Activated CD8-positive, alpha-beta memory T cell treated with anti-CD3 and anti-CD28 coated beads, Interleukin-2, amount 10 ng/mL, durations not matched to agents 7 days and 5 days (primary cell): ENCODE measurements at regions of chr1 and their contacts with region 1.

Region 1: GRCh38 chr1:31938174-31938950 is at the start of gene PTP4A2:
- DNase-seq: peak; percentile 94
- ATAC-seq: peak; percentile 71
- H3K4me3 Mint-ChIP-seq: peak within 1 kb of the TSS; percentile 99
- H3K27ac Mint-ChIP-seq: peak within 1 kb of the TSS; percentile 98
- H3K4me1 Mint-ChIP-seq: peaks cover 69% of the 10 kb centered on the region
- H3K27me3 Mint-ChIP-seq: no peaks in the 10 kb centered on the region
- total RNA-seq, gene PTP4A2: 401 to 507 TPM

Region 2: DNA sequence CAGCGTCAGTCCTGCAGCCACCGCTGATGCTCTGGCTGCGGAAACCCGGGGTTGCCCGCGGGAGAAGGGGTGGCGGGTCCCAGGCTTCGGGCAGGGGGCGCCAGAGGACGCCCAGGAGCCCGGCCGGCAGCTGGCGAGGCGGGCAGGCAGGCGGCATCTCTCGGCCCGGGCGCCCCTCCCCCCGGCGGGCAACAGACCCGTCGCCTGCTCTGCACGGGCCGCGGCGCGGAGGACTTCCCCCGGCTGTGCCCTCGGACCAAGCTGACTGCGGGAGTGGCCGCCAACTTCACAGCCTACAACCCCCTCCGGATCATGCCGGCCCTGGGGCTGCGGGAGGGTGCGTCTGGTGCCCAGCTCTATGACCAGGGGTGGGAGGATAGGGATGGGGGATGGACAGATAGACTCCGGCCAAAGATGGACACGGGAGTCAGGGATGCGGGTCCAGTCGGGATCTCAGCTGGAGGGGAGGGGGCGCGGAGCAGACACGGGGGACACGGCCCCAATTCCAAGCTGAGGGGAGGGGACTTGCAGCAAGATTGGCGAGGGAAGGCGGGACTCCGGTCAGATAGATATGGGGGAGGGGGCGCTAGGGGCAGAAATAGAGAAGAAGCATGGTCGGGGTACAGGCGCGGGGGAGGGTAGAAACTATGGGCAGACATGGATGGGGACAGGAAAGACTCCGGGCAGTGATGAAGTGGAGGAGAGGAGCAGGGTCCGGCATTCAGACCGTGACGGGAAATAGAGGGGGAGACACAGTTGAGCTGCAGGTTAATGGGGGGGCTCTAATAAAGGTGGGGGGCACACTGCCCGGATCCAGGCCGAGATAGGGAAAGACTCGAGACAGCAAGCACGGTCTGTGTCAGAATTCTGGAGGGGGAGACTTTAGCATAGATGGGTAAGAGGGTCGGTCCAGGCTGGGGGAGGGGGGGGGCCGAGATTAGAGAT is 175.4 kb before region 1 on chr1:
- CTCF ChIA-PET with region 1: no interaction called
- DNase-seq: peak; percentile 59
- ATAC-seq: peak; percentile 48
- H3K4me3 Mint-ChIP-seq: peak overlapping the region; percentile 52
- H3K27ac Mint-ChIP-seq: no peak overlapping the region
- H3K4me1 Mint-ChIP-seq: peaks cover 19% of the 10 kb centered on the region
- H3K27me3 Mint-ChIP-seq: peaks cover 53% of the 10 kb centered on the region

Region 3: DNA sequence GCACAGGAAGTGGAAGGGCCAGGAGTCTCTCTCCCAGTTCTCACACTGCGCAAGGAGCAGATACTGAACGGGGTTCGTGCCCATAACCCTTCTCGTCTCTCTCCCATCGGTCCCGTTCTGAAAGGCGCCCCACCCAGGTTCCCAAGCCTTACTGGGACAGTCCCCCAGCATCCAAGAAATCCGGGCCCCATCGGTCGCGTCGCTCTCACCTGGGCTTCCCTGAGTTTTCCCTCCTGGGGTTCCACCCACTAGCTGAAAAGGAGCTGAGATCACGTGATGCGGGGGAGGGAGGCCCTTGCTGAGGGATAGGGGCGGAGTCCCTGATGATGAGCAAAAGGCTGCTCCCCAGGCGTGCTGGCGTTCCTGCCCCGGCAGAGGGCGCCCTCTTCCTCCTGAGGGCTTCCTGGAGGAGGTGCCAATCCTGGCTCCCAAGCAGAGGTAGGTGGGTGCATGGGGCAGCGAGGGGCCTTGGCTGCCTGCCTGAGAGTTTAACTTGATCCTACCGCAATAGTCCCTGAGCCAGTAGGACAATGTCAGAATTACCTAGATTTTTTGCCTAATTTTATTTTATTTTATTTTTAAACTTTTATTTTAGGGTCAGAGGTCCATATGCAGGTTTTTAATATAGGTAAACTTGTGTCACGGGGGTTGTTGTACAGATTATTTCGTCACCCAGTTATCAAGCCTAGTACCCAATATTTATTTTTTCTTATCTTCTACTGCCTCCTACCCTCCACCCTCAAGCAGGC is 122.4 kb before region 1 on chr1 and contains the start of gene SPOCD1:
- CTCF ChIA-PET with region 1: interaction called, 10 read pairs
- DNase-seq: peak; percentile 92
- ATAC-seq: peak; percentile 94
- H3K4me3 Mint-ChIP-seq: no peak within 1 kb of the TSS
- H3K27ac Mint-ChIP-seq: no peak within 1 kb of the TSS
- H3K4me1 Mint-ChIP-seq: peaks cover 6% of the 10 kb centered on the region
- H3K27me3 Mint-ChIP-seq: no peaks in the 10 kb centered on the region
- total RNA-seq, gene SPOCD1: not detected

Region 4: DNA sequence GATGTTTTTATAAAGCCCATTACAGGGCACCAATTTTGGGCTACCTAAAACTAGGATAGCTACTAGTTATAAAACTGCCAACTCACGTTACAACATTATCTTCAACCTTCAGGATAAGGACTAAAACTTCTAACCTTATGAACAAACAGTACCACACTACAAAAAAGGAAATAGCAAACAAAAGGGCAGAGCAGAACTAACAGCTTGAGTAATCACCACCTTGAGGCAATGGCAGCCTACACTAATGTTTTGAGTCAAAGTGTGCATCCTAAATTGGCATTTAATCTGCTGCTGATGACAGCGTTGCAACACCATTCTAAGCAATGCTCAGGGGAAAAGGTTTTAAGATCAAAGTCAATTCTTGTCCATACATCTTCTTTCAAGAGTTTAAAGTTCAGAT is 27.4 kb before region 1 on chr1:
- CTCF ChIA-PET with region 1: interaction called, 22 read pairs
- DNase-seq: no peak
- ATAC-seq: peak; percentile 69
- H3K4me3 Mint-ChIP-seq: no peak overlapping the region
- H3K27ac Mint-ChIP-seq: peak overlapping the region; percentile 47
- H3K4me1 Mint-ChIP-seq: peaks cover 64% of the 10 kb centered on the region
- H3K27me3 Mint-ChIP-seq: no peaks in the 10 kb centered on the region

Region 5: GRCh38 chr1:31955917-31956736 is 17.8 kb after region 1 on chr1:
- CTCF ChIA-PET with region 1: interaction called, 530 read pairs
- DNase-seq: peak; percentile 93
- ATAC-seq: peak; percentile 82
- H3K4me3 Mint-ChIP-seq: peak overlapping the region; percentile 48
- H3K27ac Mint-ChIP-seq: peak overlapping the region; percentile 84
- H3K4me1 Mint-ChIP-seq: peaks cover 86% of the 10 kb centered on the region
- H3K27me3 Mint-ChIP-seq: no peaks in the 10 kb centered on the region